ENCODE measurements at regions of chr19 and their contacts with region 1.

Region 1: GRCh38 chr19:12672744-12673143 is 6.1 kb downstream of the WDR83 start:
- DNase-seq: no peak
- H3K4me3 ChIP-seq: no peak overlapping the region
- H3K4me3 Mint-ChIP-seq: no peak overlapping the region
- H3K27ac ChIP-seq: no peak overlapping the region
- H3K27ac Mint-ChIP-seq: peak overlapping the region in 1 of 7 donors; percentile 79
- H3K4me1 ChIP-seq: peaks cover 35% of the 10 kb centered on the region
- H3K4me1 Mint-ChIP-seq: peaks cover 22 to 50% (median 36%) of the 10 kb centered on the region in 4 donors
- H3K27me3 ChIP-seq: no peaks in the 10 kb centered on the region
- H3K27me3 Mint-ChIP-seq: no peaks in the 10 kb centered on the region

Region 2: GRCh38 chr19:12202250-12202649 is 470.5 kb before region 1 on chr19:
- CTCF ChIA-PET with region 1: no interaction called
- POLR2A ChIA-PET with region 1: no interaction called
- intact Hi-C with region 1: loop called (anchors 2 kb)
- DNase-seq: peak; percentile 41 to 57 (median 50)
- H3K4me3 ChIP-seq: no peak overlapping the region
- H3K4me3 Mint-ChIP-seq: no peak overlapping the region
- H3K27ac ChIP-seq: no peak overlapping the region
- H3K27ac Mint-ChIP-seq: no peak overlapping the region
- H3K4me1 ChIP-seq: peaks cover 8% of the 10 kb centered on the region
- H3K4me1 Mint-ChIP-seq: peaks cover 6 to 24% (median 6%) of the 10 kb centered on the region in 4 donors
- H3K27me3 ChIP-seq: no peaks in the 10 kb centered on the region
- H3K27me3 Mint-ChIP-seq: no peaks in the 10 kb centered on the region

Region 3: GRCh38 chr19:12639901-12640613 is 32.7 kb before region 1 on chr19:
- CTCF ChIA-PET with region 1: interaction called, 17 read pairs
- POLR2A ChIA-PET with region 1: interaction called, 9 read pairs
- intact Hi-C with region 1: loop called (anchors 1 kb)
- DNase-seq: peak; percentile 71 to 82 (median 75)
- H3K4me3 ChIP-seq: no peak overlapping the region
- H3K4me3 Mint-ChIP-seq: peak overlapping the region; percentile 68 to 82 (median 76)
- H3K27ac ChIP-seq: no peak overlapping the region
- H3K27ac Mint-ChIP-seq: peak overlapping the region; percentile 14 to 92 (median 54)
- H3K4me1 ChIP-seq: peaks cover 18% of the 10 kb centered on the region
- H3K4me1 Mint-ChIP-seq: peaks cover 11 to 15% (median 14%) of the 10 kb centered on the region in 4 donors
- H3K27me3 ChIP-seq: no peaks in the 10 kb centered on the region
- H3K27me3 Mint-ChIP-seq: no peaks in the 10 kb centered on the region

Measured in CD4-positive, alpha-beta memory T cell (primary cell).